ENCODE measurements at regions of chr20 and their contacts with region 1.

Region 1: DNA sequence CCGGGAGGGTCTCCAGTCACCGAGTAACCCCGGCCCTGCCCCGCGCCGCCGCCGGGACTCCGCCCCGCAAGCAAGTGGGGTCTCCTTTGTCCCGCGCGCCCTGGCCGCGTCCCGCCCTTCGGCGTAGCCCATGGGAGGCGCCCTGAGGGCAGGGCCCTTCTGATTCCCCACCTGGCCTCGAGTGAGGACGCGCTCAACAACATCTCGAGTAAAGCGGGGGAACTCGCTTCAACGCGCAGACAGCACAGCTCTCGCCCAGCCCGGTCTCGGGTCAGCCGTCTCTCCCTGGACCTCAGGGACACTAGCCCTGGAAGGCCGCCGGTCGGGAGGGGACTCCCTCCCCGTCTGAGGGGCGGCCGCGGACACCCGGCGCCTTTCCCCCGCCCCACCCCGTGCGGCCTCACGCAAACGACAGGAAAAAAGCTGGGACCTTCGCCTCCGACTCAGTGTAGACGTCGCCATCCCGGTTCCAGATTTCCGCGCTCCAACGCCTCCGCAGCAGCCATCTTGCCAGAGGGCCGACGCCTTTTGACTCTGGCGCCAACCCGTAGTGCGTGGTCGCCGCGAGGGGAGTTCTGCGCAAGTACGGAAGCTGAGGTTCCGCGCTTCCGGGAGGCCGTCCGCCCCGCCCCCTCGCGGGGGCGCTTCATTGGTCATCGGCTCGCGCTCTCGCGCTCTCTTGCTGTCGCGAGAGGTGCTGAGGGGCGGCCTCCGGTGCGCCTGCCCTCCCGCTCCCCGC is 412 bp upstream of the GID8 start:
- DNase-seq: peak; percentile 98
- H3K4me3 ChIP-seq: peak overlapping the region; percentile 72 to 94 (median 80)
- H3K27ac ChIP-seq: peak overlapping the region; percentile 89 to 99 (median 94)
- H3K4me1 ChIP-seq: peaks cover 0 to 68% (median 57%) of the 10 kb centered on the region in 4 donors
- H3K27me3 ChIP-seq: no peaks in the 10 kb centered on the region
- CTCF ChIP-seq: no peak
- EP300 ChIP-seq: peak in 2 of 4 donors; percentile 21 to 81
- POLR2A ChIP-seq: peak; percentile 78 to 80

Region 2: GRCh38 chr20:62652051-62652926 is 285.2 kb before region 1 on chr20:
- intact Hi-C with region 1: loop called (anchors 10 kb)
- DNase-seq: peak; percentile 98
- H3K4me3 ChIP-seq: peak overlapping the region; percentile 10 to 35 (median 32)
- H3K27ac ChIP-seq: peak overlapping the region; percentile 88 to 96 (median 92)
- H3K4me1 ChIP-seq: peaks cover 0 to 29% (median 21%) of the 10 kb centered on the region in 4 donors
- H3K27me3 ChIP-seq: no peaks in the 10 kb centered on the region
- CTCF ChIP-seq: peak in 1 of 4 experiments; percentile 35
- EP300 ChIP-seq: peak in 3 of 4 donors; percentile 74 to 98 (median 94)
- POLR2A ChIP-seq: peak; percentile 56 to 65

Region 3: DNA sequence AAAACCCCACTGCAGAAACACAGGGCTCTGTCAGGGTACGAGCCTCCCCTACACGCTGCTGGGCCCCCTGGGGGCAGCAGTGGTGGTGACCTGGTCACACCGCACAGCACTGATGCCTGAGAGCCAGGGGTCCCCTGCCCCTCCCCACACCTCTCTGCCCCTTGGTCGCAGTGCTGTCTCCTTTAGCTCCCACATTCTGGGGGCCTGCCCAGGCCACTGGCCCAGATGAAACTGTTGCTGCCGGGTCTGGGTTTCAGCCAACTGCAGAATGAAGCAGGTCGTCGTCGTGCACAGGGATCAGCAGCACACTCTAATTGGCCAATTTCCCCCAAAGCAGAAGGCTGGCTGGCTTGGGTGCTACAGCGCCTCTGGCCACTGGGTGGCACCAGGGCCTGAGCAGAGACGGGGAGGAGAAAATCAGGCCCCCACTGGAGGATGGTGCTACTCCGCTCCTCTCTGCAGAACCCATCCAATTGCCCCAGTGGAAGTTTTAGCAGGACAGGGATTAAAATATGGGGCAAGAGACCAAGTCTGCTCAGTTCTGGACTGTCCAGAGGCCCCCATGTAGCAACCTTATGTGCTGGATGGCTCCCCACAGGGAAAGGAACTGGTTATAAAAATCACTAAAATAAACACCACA is 37.4 kb before region 1 on chr20:
- intact Hi-C with region 1: loop called (anchors 5 kb)
- DNase-seq: peak; percentile 92
- H3K4me3 ChIP-seq: peak overlapping the region in 1 of 4 donors; percentile 2
- H3K27ac ChIP-seq: peak overlapping the region; percentile 3 to 68 (median 31)
- H3K4me1 ChIP-seq: peaks cover 0 to 39% (median 25%) of the 10 kb centered on the region in 4 donors
- H3K27me3 ChIP-seq: no peaks in the 10 kb centered on the region
- CTCF ChIP-seq: peak; percentile 89 to 93 (median 90)
- EP300 ChIP-seq: no peak
- POLR2A ChIP-seq: no peak

Measured in sigmoid colon (tissue), 7 donors.